ENCODE measurements at regions of chr3 and their contacts with region 1.

Region 1: GRCh38 chr3:41893977-41894376 is 67.9 kb downstream of the ULK4 start:
- DNase-seq: no peak
- H3K4me3 ChIP-seq: no peak overlapping the region
- H3K27ac ChIP-seq: no peak overlapping the region
- H3K4me1 ChIP-seq: no peaks in the 10 kb centered on the region
- H3K27me3 ChIP-seq: no peaks in the 10 kb centered on the region
- CTCF ChIP-seq: peak in 8 of 11 experiments; percentile 28 to 62 (median 46)
- POLR2A ChIP-seq: no peak

Region 2: GRCh38 chr3:41622769-41623168 is 271.2 kb before region 1 on chr3:
- intact Hi-C with region 1: no loop called
- DNase-seq: no peak
- H3K4me3 ChIP-seq: no peak overlapping the region
- H3K27ac ChIP-seq: no peak overlapping the region
- H3K4me1 ChIP-seq: no peaks in the 10 kb centered on the region
- H3K27me3 ChIP-seq: no peaks in the 10 kb centered on the region
- CTCF ChIP-seq: no peak
- POLR2A ChIP-seq: no peak

Region 3: GRCh38 chr3:41846850-41847249 is 47.1 kb before region 1 on chr3:
- intact Hi-C with region 1: no loop called
- DNase-seq: no peak
- H3K4me3 ChIP-seq: no peak overlapping the region
- H3K27ac ChIP-seq: no peak overlapping the region
- H3K4me1 ChIP-seq: no peaks in the 10 kb centered on the region
- H3K27me3 ChIP-seq: no peaks in the 10 kb centered on the region
- CTCF ChIP-seq: no peak
- POLR2A ChIP-seq: no peak

Region 4: DNA sequence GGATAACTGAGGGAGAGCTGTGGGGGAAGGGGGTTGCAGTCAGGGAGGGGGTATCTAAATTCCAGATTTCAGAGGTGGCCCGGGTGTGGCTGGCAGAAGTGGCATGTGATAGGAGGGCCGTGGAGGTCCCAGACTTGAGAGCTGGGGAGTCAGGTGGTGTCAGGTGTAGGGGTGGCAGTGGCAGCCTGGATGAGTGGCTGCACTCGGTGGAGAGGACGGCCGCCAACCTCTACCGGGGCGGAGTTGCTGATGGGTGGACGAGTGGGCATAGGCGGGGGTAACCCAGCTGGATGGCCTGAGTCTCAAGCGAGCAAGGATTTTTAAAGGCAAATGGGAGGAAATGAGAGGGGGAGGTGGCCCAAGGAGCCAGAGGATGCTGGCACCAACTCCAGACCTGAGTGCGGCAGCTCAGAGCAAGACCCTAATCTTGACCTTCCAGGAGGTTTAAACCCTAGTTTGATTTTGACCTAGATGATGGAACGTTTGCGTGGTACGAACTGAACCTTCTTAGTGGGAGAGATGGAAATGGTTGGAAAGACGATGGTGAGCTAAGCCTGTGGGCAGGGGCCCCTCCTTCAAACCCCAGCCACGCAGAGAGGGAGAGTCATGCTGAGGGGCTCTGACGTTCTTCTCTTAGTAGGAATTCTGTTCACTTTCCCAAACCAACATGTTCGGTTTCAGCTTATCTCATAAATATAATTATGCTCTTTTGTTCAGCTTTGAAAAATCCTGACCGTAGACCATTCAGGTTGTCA is 205.2 kb after region 1 on chr3:
- intact Hi-C with region 1: loop called (anchors 2 kb)
- DNase-seq: peak; percentile 71
- H3K4me3 ChIP-seq: no peak overlapping the region
- H3K27ac ChIP-seq: peak overlapping the region in 5 of 8 donors; percentile 2 to 58 (median 37)
- H3K4me1 ChIP-seq: peaks cover 5 to 77% (median 50%) of the 10 kb centered on the region in 6 donors
- H3K27me3 ChIP-seq: no peaks in the 10 kb centered on the region
- CTCF ChIP-seq: no peak
- POLR2A ChIP-seq: no peak

Region 5: GRCh38 chr3:42190701-42191462 is 296.9 kb after region 1 on chr3:
- intact Hi-C with region 1: loop called (anchors 5 kb)
- DNase-seq: no peak
- H3K4me3 ChIP-seq: no peak overlapping the region
- H3K27ac ChIP-seq: peak overlapping the region in 1 of 8 donors; percentile 5
- H3K4me1 ChIP-seq: peaks cover 12 to 53% (median 32%) of the 10 kb centered on the region in 6 donors
- H3K27me3 ChIP-seq: no peaks in the 10 kb centered on the region
- CTCF ChIP-seq: peak; percentile 41 to 84 (median 70)
- POLR2A ChIP-seq: no peak

Region 6: GRCh38 chr3:42443819-42444436 is 550.0 kb after region 1 on chr3:
- intact Hi-C with region 1: loop called (anchors 10 kb)
- DNase-seq: peak; percentile 92
- H3K4me3 ChIP-seq: no peak overlapping the region
- H3K27ac ChIP-seq: no peak overlapping the region
- H3K4me1 ChIP-seq: no peaks in the 10 kb centered on the region
- H3K27me3 ChIP-seq: peaks cover 0 to 15% (median 0%) of the 10 kb centered on the region in 7 donors
- CTCF ChIP-seq: peak; percentile 77 to 99 (median 95)
- POLR2A ChIP-seq: no peak